Activated B cell treated with CpG ODN at 0.5 μM for 24 hours (primary cell): ENCODE measurements at regions of chr3 and their contacts with region 1.

Region 1: DNA sequence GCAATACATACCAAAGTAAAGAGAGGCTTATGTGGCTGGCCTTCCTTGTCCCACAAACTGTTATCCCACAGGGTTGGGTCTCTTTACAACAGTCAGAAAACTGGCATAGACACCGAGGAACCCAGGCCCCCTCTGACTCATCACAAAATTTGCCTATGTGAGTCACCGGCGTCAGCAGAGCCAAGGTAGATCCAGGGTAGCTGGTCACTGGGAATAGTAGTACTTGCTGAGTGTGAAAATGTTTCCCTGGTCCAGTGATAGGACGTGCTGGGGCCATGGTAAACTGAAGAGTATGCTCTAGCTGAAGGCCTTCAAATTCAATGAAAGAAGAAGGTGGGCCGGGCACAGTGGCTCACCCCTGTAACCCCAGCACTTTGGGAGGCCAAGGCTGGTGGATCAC is 27.1 kb upstream of the SKIL start:
- DNase-seq: no peak
- ATAC-seq: peak; percentile 79
- H3K4me3 Mint-ChIP-seq: peak overlapping the region; percentile 32
- H3K27ac Mint-ChIP-seq: peak overlapping the region; percentile 53
- H3K4me1 Mint-ChIP-seq: peaks cover 26% of the 10 kb centered on the region
- H3K27me3 Mint-ChIP-seq: no peaks in the 10 kb centered on the region
- CTCF ChIP-seq: no peak

Region 2: DNA sequence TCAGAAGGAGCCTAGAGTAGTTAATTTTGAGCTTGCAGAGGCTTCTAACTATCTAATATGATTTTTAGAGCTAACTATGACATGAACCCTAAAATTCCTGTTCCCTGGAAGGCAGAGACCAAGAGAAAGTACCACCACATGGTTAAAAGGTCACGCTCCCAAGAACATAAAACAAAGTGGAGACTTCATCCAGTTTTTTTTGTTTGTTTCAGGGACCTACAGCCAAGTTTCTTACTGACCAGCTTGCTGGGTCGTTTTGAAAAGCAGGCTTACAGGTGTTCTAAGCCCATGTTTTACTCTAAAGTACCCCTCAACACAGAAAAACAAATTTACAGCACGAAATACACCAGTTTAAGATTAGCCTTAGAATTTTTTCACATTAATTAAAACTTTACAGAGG is 12.4 kb before region 1 on chr3:
- CTCF ChIA-PET with region 1: interaction called, 3 read pairs
- POLR2A ChIA-PET with region 1: no interaction called
- intact Hi-C with region 1: loop called (anchors 2 kb)
- DNase-seq: no peak
- ATAC-seq: no peak
- H3K4me3 Mint-ChIP-seq: no peak overlapping the region
- H3K27ac Mint-ChIP-seq: no peak overlapping the region
- H3K4me1 Mint-ChIP-seq: peaks cover 4% of the 10 kb centered on the region
- H3K27me3 Mint-ChIP-seq: no peaks in the 10 kb centered on the region
- CTCF ChIP-seq: no peak

Region 3: GRCh38 chr3:170350515-170351413 is 20.4 kb after region 1 on chr3:
- CTCF ChIA-PET with region 1: no interaction called
- POLR2A ChIA-PET with region 1: interaction called, 32 read pairs
- intact Hi-C with region 1: loop called (anchors 1 kb)
- DNase-seq: no peak
- ATAC-seq: peak; percentile 38
- H3K4me3 Mint-ChIP-seq: peak overlapping the region; percentile 66
- H3K27ac Mint-ChIP-seq: peak overlapping the region; percentile 80
- H3K4me1 Mint-ChIP-seq: peaks cover 85% of the 10 kb centered on the region
- H3K27me3 Mint-ChIP-seq: no peaks in the 10 kb centered on the region
- CTCF ChIP-seq: no peak

Region 4: GRCh38 chr3:170641510-170642236 is 311.3 kb after region 1 on chr3:
- CTCF ChIA-PET with region 1: no interaction called
- POLR2A ChIA-PET with region 1: no interaction called
- intact Hi-C with region 1: no loop called
- DNase-seq: no peak
- ATAC-seq: no peak
- H3K4me3 Mint-ChIP-seq: no peak overlapping the region
- H3K27ac Mint-ChIP-seq: no peak overlapping the region
- H3K4me1 Mint-ChIP-seq: no peaks in the 10 kb centered on the region
- H3K27me3 Mint-ChIP-seq: peaks cover 52% of the 10 kb centered on the region
- CTCF ChIP-seq: no peak

Region 5: DNA sequence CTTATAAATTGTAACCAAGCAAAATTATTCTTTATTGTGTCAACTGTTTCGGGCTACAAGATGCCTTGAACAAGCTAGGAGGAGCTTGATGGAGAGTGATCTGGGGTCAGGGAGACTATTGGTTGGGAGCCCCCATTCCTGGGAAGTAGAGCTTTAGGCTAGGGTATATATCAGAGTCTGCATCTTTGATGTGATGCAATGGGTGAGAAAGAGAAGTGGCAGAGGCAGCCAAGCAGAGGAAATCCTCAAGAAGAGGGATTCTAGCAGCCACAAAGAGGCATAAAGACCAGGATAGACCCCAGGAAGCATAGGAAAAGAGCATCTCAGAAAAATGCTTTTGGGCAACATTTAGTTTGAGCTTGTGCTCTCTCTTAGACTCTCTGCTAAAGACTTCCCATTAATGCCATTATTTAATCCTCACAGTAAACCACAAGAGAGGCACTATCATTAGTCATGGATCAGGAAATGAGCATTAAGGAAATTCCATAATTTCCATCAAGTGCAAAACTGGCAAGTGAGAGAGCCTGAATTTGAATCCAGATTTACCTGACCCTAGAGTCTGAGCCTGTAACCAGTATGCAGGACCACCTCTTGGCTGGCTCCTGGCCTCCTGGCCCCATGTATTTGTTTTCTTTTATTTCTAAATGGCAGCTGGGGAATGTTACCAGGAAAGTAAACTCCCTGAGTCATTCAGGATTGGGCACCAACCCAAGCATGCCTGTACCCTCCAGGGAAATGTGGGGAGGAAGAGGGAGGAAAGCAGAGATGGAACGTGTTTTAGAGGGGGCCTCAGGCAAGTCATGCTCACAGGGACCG is 420.9 kb after region 1 on chr3:
- CTCF ChIA-PET with region 1: no interaction called
- POLR2A ChIA-PET with region 1: no interaction called
- intact Hi-C with region 1: no loop called
- DNase-seq: no peak
- ATAC-seq: no peak
- H3K4me3 Mint-ChIP-seq: no peak overlapping the region
- H3K27ac Mint-ChIP-seq: no peak overlapping the region
- H3K4me1 Mint-ChIP-seq: no peaks in the 10 kb centered on the region
- H3K27me3 Mint-ChIP-seq: peaks cover 36% of the 10 kb centered on the region
- CTCF ChIP-seq: no peak